Posterior cingulate gyrus (tissue), 11 donors: ENCODE measurements at regions of chr5 and their contacts with region 1.

Region 1: DNA sequence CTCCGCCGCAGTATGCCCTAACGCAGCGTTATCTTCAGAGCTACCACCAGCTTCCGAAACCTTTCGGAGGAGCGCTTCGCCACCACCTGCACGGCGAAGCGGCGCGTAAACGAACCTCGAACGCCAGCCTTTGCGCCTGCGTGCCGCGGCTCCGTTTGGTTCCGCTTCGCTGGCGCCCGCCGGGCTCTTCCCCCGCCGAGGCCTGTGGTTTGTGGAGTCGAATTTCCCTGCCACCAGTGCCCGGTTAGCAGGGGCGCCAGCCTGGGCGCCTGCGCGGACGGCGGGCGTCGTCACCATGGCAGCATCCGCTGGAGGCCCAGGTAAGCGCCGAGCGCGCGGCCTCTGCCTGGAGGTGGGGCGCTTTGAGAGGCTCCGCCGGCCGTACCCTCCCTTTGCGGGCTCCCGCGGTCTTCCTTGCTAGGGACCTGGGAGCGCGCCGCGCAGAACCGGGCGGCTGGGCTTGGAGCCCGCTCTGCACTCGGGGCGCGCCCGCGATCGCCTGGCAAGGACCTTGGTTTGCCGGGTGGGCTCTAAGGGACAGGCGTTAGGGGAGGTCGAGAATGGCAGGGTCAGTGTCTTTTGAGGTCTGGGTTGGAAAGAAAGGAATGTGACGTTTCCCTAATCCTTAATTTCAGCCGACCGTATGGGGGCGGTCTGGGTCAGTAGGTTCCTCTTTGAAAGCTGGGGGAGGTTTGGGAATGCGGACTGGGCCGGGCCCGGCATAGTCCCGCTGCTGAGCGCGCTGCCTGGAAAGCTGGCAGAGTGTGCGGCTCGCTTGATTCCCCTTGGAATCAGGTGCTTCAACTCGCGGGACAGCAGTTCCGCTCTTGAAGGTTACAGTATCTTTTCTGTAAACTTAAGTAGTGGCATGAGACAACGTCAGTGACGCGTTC is at the start of gene FAM151B:
- DNase-seq: peak; percentile 68 to 98 (median 85)

Region 2: GRCh38 chr5:80453366-80453765 is 34.7 kb before region 1 on chr5:
- intact Hi-C with region 1: no loop called
- DNase-seq: no peak

Region 3: GRCh38 chr5:80654391-80655230 is 166.5 kb after region 1 on chr5 and contains the starts of genes DHFR and MSH3:
- intact Hi-C with region 1: loop called (anchors 5 kb)
- DNase-seq: peak; percentile 65 to 97 (median 80)

Region 4: DNA sequence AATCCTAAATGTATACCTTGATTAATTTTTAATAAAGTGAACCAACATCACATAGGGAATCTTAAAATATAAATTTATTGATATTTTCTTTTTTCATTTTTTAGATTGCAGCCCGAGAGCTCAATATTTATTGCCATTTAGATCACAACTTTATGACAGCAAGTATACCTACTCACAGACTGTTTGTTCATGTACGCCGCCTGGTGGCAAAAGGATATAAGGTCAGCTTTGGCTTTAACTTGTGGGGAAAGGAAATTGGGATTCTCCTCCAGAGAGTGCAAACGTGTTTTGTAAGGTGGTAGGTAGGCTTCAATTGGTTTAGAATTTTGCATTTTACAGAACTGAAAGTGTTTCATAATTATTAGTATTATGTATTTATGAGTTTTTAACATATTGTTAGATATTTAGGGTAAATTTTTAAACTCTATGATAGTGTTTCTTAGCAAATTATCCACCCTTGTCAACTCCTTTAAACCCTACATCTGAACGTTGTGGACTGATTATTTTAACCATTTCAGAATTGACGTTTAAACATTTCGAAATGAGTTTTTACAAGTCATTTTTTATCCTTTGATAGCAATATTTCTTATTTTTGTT is 184.2 kb after region 1 on chr5:
- intact Hi-C with region 1: loop called (anchors 5 kb)
- DNase-seq: peak in 8 of 10 donors; percentile 50 to 86 (median 68)